ENCODE measurements at regions of chr5 and their contacts with region 1.

Region 1: DNA sequence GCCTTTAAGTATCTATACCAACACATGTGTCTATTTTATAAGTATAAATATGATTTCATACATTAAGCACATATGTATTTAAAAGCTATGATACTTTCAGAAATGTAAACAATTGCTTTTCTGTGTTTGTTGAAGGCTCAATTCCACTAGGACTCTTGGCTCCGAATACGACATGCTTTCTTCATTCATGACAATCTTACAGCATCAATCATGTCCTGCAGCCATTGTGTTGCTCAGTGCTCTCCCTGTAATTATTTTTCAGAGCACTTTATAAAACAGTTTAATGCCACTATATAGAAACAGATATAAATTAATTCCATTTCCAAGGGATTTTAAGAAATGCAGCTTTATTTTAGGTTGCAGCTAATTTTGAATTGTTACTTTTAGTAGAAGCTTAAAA is 167.3 kb downstream of the TAF11L14 start:
- DNase-seq: no peak
- ATAC-seq: no peak
- H3K4me3 ChIP-seq: no peak overlapping the region
- H3K4me3 Mint-ChIP-seq: no peak overlapping the region
- H3K27ac ChIP-seq: no peak overlapping the region
- H3K27ac Mint-ChIP-seq: no peak overlapping the region
- H3K4me1 ChIP-seq: no peaks in the 10 kb centered on the region
- H3K4me1 Mint-ChIP-seq: no peaks in the 10 kb centered on the region
- H3K27me3 ChIP-seq: no peaks in the 10 kb centered on the region
- H3K27me3 Mint-ChIP-seq: no peaks in the 10 kb centered on the region
- CTCF ChIP-seq: no peak

Region 2: DNA sequence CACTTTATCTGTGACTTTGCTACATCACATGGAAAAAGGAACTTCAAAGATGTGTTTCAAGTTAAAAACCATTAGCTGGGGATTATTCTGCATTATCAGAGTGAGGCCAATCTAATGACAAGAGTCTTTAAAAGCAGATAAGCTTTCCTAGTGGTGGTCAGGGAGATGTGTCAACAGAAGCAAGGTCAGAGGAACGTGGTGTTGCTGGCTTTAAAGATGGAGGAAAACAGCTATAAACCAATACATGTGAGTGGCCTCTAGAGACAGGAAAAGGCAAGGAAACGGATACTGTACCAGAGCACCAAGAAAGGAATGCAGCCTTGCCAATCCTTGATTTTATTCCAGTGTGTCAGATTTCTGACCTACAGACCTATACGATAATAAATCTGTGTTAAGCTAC is 36.9 kb after region 1 on chr5:
- CTCF ChIA-PET with region 1: no interaction called
- POLR2A ChIA-PET with region 1: no interaction called
- intact Hi-C with region 1: loop called in 1 of 2 experiments (anchors 1 kb)
- DNase-seq: no peak
- ATAC-seq: no peak
- H3K4me3 ChIP-seq: no peak overlapping the region
- H3K4me3 Mint-ChIP-seq: no peak overlapping the region
- H3K27ac ChIP-seq: no peak overlapping the region
- H3K27ac Mint-ChIP-seq: no peak overlapping the region
- H3K4me1 ChIP-seq: no peaks in the 10 kb centered on the region
- H3K4me1 Mint-ChIP-seq: no peaks in the 10 kb centered on the region
- H3K27me3 ChIP-seq: no peaks in the 10 kb centered on the region
- H3K27me3 Mint-ChIP-seq: no peaks in the 10 kb centered on the region
- CTCF ChIP-seq: no peak